A673 (cell line): ENCODE measurements at regions of chr3 and their contacts with region 1.

Region 1: GRCh38 chr3:155352900-155353490 is 59.5 kb upstream of the STRIT1 start:
- DNase-seq: peak; percentile 70
- H3K4me3 ChIP-seq: no peak overlapping the region
- H3K27ac ChIP-seq: no peak overlapping the region
- H3K4me1 ChIP-seq: no peaks in the 10 kb centered on the region
- H3K27me3 ChIP-seq: no peaks in the 10 kb centered on the region
- CTCF ChIP-seq: peak; percentile 65

Region 2: DNA sequence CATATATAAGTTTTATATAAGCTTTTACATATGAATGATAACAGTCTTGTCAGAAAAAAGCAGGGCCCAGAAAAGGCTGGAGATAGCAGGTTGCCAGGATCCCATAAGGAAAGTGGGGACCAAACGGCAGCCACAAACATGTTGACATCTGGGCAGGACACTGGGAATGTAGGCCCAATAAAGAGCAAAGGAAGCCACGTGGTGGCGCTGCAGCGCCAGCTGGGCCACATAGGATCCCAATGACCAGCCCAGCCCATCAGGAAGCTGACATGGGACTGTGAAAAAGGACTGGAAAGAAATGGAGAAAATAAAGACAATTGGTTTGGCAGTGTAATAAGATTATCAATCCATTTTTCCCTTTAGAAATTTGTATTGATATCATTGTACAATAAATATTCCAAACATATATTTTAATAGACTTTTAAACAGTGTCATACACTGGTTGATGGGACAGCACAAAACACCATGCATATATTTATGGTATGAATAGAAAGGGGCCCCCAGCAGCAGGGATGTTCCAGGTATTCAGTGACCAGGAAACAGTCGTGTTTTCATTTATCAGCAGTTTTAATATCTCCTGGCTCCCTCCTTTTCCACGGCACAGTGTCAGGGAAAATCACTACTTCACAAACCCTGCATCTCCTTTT is 29.5 kb after region 1 on chr3:
- CTCF ChIA-PET with region 1: interaction called, 4 read pairs
- POLR2A ChIA-PET with region 1: no interaction called
- intact Hi-C with region 1: loop called (anchors 1 kb)
- DNase-seq: peak; percentile 80
- H3K4me3 ChIP-seq: no peak overlapping the region
- H3K27ac ChIP-seq: no peak overlapping the region
- H3K4me1 ChIP-seq: no peaks in the 10 kb centered on the region
- H3K27me3 ChIP-seq: no peaks in the 10 kb centered on the region
- CTCF ChIP-seq: peak; percentile 92

Region 3: DNA sequence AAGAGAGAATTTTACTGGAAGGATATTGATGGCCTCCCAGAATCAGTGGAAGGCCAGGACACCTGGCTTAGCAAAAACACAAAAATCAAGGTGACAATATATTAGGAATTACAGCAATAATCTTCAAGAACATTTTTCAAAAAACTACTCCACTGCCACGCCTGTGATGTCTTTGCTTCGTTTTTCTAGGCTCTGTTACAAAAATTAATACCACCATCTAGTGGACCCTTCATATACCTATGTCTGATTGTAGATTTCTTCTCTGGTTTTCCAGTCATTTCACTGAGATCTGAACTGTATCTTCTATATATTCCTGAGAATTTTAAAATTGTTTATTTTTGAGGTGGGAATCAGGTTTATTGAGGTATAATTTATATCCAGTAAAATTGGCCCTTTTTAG is 506.9 kb after region 1 on chr3:
- CTCF ChIA-PET with region 1: no interaction called
- POLR2A ChIA-PET with region 1: no interaction called
- intact Hi-C with region 1: loop called (anchors 5 kb)
- DNase-seq: peak; percentile 42
- H3K4me3 ChIP-seq: no peak overlapping the region
- H3K27ac ChIP-seq: no peak overlapping the region
- H3K4me1 ChIP-seq: no peaks in the 10 kb centered on the region
- H3K27me3 ChIP-seq: no peaks in the 10 kb centered on the region
- CTCF ChIP-seq: peak; percentile 52